ENCODE measurements at regions of chr11 and their contacts with region 1.

Region 1: DNA sequence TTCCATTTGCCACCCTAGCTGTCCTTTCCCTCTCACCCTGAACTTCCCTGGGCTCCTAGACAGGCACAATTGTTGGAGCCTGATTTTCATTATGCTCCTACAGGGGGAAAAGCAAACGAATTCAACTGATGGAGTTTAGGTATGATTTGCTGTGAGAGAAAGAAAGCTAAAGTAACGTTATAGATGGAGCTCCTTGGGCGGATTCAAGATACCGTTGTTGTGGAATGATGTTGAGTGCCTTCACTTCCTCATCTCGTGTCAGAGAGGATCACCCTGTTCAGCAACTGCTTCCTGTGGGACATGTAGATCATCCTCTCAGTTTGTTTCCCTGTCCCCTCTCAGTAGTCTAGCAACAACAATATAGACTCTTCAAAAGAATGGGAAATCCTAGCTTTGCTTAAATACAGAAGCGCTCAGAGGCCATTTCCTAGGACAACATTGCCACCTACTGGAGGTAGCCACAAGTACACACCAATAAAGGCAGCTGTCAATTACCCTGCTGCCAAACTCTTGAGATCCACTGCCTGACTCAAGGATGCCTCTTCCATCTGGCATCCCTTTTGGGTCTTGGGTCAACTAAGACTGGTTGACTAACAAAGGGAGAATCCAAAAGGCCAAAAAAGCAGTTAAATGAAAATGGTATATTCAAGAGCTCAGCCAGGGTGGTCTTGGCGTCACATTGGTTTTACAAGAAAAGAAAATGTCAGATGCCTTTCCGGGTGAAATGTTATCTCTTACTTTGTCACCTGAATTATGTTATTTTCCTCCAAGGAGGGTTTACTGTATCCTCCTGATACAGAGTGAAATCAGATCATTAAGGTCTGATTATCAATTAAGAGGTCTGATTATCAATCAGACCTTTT is 13.5 kb upstream of the DTX4 start:
- DNase-seq: no peak
- ATAC-seq: peak; percentile 99
- H3K4me3 Mint-ChIP-seq: peak overlapping the region; percentile 55
- H3K27ac Mint-ChIP-seq: peak overlapping the region; percentile 77
- H3K4me1 Mint-ChIP-seq: peaks cover 27% of the 10 kb centered on the region
- H3K27me3 Mint-ChIP-seq: no peaks in the 10 kb centered on the region
- CTCF ChIP-seq: no peak

Region 2: GRCh38 chr11:57493507-57494503 is 1664.6 kb before region 1 on chr11:
- CTCF ChIA-PET with region 1: no interaction called
- POLR2A ChIA-PET with region 1: no interaction called
- intact Hi-C with region 1: loop called (anchors 5 kb)
- DNase-seq: peak; percentile 64
- ATAC-seq: peak; percentile 96
- H3K4me3 Mint-ChIP-seq: no peak overlapping the region
- H3K27ac Mint-ChIP-seq: peak overlapping the region; percentile 76
- H3K4me1 Mint-ChIP-seq: peaks cover 7% of the 10 kb centered on the region
- H3K27me3 Mint-ChIP-seq: no peaks in the 10 kb centered on the region
- CTCF ChIP-seq: peak; percentile 30

Region 3: DNA sequence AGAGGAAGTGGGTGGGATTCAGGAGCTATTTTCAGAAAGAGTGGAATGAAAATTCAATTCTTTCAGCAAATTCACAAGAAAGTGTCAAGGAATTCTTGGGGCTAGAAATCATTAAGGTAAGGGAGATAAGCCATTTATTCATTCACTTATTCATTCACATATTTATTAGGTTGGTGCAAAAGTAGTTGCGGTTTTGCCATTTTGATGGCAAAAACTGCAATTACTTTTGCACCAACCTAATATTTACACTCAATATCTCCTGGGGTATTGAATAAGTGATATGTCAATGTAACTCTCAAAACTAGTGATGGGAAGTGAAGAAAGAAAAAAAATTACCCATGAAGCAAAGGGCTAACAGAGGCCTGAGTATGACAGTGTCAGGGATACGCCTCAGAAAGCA is 890.3 kb before region 1 on chr11 and contains the start of gene OR10W1:
- CTCF ChIA-PET with region 1: no interaction called
- POLR2A ChIA-PET with region 1: no interaction called
- intact Hi-C with region 1: no loop called
- DNase-seq: no peak
- ATAC-seq: no peak
- H3K4me3 Mint-ChIP-seq: no peak within 1 kb of the TSS
- H3K27ac Mint-ChIP-seq: no peak within 1 kb of the TSS
- H3K4me1 Mint-ChIP-seq: no peaks in the 10 kb centered on the region
- H3K27me3 Mint-ChIP-seq: peaks cover 12% of the 10 kb centered on the region
- CTCF ChIP-seq: no peak
- total RNA-seq, gene OR10W1: not detected in 2 replicates

Region 4: DNA sequence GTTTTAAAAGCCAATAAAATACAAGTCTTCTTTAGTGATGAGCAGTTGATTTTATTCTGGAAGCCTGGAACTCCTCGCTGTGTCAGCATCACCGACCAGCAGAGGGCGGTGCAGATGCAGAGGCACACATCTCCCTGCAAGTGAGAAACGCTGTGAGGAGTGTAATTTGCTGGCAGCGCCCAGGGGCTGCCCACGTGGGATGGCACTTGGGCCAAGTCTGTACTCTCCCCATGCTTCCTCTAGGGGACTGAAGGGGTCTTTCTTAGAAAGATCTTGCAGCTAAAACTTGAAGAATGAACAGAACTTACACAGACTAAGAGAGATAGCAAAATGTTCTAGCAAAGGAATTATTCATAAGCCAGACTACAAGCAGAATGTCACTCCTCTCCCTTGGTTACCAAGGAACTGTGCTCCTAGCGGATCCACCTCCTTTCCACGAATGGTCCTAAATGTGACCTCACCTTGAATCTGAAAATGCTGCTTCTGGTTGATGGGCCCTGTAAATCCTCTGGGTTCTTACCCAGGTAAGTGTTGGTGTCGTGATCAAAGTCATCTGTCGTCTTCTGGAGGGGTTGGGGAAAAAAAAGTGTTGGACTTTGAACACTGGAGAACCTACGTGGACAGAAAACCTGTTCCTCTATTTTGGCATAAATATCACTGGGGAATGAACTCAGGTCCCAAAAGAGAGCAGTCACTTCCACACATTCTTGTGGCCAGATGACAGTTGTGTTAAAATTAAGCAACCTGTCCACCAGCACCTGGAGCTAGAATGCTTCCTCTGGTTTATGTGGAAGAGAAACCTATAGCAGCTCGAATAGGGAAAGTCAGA is 504.1 kb before region 1 on chr11:
- CTCF ChIA-PET with region 1: interaction called, 21 read pairs
- POLR2A ChIA-PET with region 1: interaction called, 3 read pairs
- intact Hi-C with region 1: loop called (anchors 1 kb)
- DNase-seq: peak; percentile 69
- ATAC-seq: peak; percentile 99
- H3K4me3 Mint-ChIP-seq: no peak overlapping the region
- H3K27ac Mint-ChIP-seq: no peak overlapping the region
- H3K4me1 Mint-ChIP-seq: peaks cover 5% of the 10 kb centered on the region
- H3K27me3 Mint-ChIP-seq: no peaks in the 10 kb centered on the region
- CTCF ChIP-seq: peak; percentile 25

Region 5: GRCh38 chr11:58958500-58958899 is 199.9 kb before region 1 on chr11:
- CTCF ChIA-PET with region 1: interaction called, 43 read pairs
- POLR2A ChIA-PET with region 1: no interaction called
- intact Hi-C with region 1: loop called (anchors 1 kb)
- DNase-seq: peak; percentile 42
- ATAC-seq: peak; percentile 82
- H3K4me3 Mint-ChIP-seq: no peak overlapping the region
- H3K27ac Mint-ChIP-seq: no peak overlapping the region
- H3K4me1 Mint-ChIP-seq: peaks cover 2% of the 10 kb centered on the region
- H3K27me3 Mint-ChIP-seq: no peaks in the 10 kb centered on the region
- CTCF ChIP-seq: no peak

Region 6: DNA sequence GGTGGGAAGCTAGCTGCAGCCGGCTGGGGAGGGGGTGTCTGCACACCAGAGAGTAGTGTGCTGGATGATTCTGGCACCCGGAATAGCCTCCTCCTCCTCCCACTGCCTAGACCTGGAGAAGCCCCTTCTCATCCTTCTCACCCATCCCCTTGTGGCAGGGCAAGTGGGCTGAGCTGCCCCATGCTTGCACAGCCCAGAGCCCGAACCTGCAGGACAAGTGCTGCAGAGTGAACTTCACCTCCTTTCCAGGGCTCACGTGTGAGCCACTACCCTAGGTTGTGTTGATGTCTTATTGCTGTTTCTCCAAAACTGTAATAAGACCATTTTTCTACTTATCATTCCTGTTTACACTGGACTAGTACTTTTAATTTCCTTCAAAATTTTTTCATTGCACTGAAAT is 128.4 kb before region 1 on chr11:
- CTCF ChIA-PET with region 1: no interaction called
- POLR2A ChIA-PET with region 1: no interaction called
- intact Hi-C with region 1: no loop called
- DNase-seq: no peak
- ATAC-seq: no peak
- H3K4me3 Mint-ChIP-seq: no peak overlapping the region
- H3K27ac Mint-ChIP-seq: no peak overlapping the region
- H3K4me1 Mint-ChIP-seq: peaks cover 5% of the 10 kb centered on the region
- H3K27me3 Mint-ChIP-seq: no peaks in the 10 kb centered on the region
- CTCF ChIP-seq: no peak

Region 7: DNA sequence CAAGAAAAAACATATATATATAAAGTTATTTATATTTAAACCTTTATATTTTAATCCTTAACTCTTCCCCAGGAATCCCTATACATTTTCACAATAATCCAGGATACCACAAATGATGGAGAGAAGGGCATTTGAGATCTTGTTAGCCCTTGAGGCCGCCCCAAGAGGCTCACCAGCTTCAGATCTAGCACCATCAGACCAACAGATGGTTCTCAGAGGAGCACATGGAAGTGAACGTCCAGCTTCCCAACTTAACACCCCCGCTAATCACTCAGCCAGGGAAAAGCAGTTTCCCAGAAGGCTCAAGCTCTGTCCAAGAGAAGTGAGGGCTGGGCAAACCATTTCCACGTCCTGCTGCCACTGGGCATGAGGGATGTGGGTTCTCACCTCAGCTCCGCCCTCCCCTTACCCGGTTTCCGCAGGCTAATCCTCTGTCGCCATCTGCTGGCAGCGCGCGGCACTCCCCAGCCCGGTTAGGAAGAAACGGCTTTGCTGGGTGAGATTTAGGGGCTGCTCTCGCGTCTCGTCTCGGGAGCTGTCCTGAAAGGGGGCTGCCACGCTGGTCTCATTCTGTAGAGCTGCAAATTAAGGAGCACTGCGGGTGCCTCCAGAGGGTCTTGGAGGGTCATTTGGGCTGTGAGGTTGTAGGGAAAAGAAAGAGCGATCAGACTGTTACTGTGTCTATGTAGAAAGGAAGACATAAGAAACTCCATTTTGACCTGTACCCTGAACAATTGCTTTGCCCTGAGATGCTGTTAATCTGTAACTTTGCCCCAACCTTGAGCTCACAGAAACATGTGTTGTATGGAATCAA is 22.6 kb before region 1 on chr11:
- CTCF ChIA-PET with region 1: interaction called, 97 read pairs
- POLR2A ChIA-PET with region 1: interaction called, 4 read pairs
- intact Hi-C with region 1: no loop called
- DNase-seq: peak; percentile 85
- ATAC-seq: peak; percentile 98
- H3K4me3 Mint-ChIP-seq: peak overlapping the region; percentile 69
- H3K27ac Mint-ChIP-seq: peak overlapping the region; percentile 88
- H3K4me1 Mint-ChIP-seq: peaks cover 25% of the 10 kb centered on the region
- H3K27me3 Mint-ChIP-seq: no peaks in the 10 kb centered on the region
- CTCF ChIP-seq: peak; percentile 91

Region 8: DNA sequence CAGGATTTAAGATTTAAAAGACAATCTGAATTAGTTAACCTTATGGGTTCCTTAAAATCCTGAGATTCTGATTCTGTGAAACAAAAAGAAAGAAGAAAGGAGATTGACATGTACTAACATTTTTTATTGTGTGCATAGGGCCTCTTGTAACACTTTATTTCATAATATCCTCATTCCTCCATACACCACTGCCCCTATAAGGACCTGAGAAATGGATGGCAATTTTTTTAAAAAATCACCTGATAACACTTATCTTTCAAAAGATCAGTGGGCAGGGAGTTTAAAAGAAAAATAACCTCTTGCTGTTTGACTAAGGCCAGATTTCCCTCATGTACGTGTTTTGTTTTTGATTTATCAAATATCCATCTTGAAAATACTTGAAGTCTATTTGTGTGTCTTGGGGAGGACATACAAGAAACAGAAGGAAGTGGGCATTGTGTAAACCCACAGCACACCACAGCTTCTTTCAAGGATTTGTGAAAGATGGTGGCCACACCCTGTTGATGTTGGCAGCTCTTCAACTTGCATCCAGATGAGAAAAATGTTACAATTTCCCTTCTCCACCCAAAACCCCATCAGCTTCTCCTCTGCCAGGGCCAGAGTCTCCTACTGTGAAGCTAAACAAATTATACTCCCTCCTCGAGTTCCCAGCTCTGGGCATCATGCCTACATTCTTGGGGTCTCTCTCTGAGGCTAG is 89.2 kb after region 1 on chr11:
- CTCF ChIA-PET with region 1: no interaction called
- POLR2A ChIA-PET with region 1: no interaction called
- intact Hi-C with region 1: no loop called
- DNase-seq: no peak
- ATAC-seq: no peak
- H3K4me3 Mint-ChIP-seq: no peak overlapping the region
- H3K27ac Mint-ChIP-seq: no peak overlapping the region
- H3K4me1 Mint-ChIP-seq: peaks cover 7% of the 10 kb centered on the region
- H3K27me3 Mint-ChIP-seq: no peaks in the 10 kb centered on the region
- CTCF ChIP-seq: no peak

Region 9: GRCh38 chr11:59429924-59430516 is 271.6 kb after region 1 on chr11:
- CTCF ChIA-PET with region 1: interaction called, 18 read pairs
- POLR2A ChIA-PET with region 1: no interaction called
- intact Hi-C with region 1: no loop called
- DNase-seq: no peak
- ATAC-seq: peak; percentile 87
- H3K4me3 Mint-ChIP-seq: no peak overlapping the region
- H3K27ac Mint-ChIP-seq: no peak overlapping the region
- H3K4me1 Mint-ChIP-seq: no peaks in the 10 kb centered on the region
- H3K27me3 Mint-ChIP-seq: peaks cover 9% of the 10 kb centered on the region
- CTCF ChIP-seq: peak; percentile 50

Region 10: GRCh38 chr11:59756845-59757244 is 598.4 kb after region 1 on chr11:
- CTCF ChIA-PET with region 1: no interaction called
- POLR2A ChIA-PET with region 1: no interaction called
- intact Hi-C with region 1: no loop called
- DNase-seq: no peak
- ATAC-seq: peak; percentile 43
- H3K4me3 Mint-ChIP-seq: peak overlapping the region; percentile 86
- H3K27ac Mint-ChIP-seq: no peak overlapping the region
- H3K4me1 Mint-ChIP-seq: peaks cover 28% of the 10 kb centered on the region
- H3K27me3 Mint-ChIP-seq: no peaks in the 10 kb centered on the region
- CTCF ChIP-seq: no peak